ENCODE measurements at regions of chr1 and their contacts with region 1.

Region 1: GRCh38 chr1:31815752-31816500 is at the start of gene SPOCD1:
- DNase-seq: peak; percentile 74
- H3K4me3 Mint-ChIP-seq: no peak within 1 kb of the TSS
- H3K27ac Mint-ChIP-seq: no peak within 1 kb of the TSS
- H3K4me1 Mint-ChIP-seq: peaks cover 10% of the 10 kb centered on the region
- H3K27me3 Mint-ChIP-seq: peaks cover 6% of the 10 kb centered on the region
- total RNA-seq, gene SPOCD1: not detected in 2 replicates

Region 2: GRCh38 chr1:31584041-31584868 is 231.7 kb before region 1 on chr1:
- intact Hi-C with region 1: no loop called
- DNase-seq: no peak
- H3K4me3 Mint-ChIP-seq: no peak overlapping the region
- H3K27ac Mint-ChIP-seq: no peak overlapping the region
- H3K4me1 Mint-ChIP-seq: no peaks in the 10 kb centered on the region
- H3K27me3 Mint-ChIP-seq: peaks cover 6% of the 10 kb centered on the region

Region 3: DNA sequence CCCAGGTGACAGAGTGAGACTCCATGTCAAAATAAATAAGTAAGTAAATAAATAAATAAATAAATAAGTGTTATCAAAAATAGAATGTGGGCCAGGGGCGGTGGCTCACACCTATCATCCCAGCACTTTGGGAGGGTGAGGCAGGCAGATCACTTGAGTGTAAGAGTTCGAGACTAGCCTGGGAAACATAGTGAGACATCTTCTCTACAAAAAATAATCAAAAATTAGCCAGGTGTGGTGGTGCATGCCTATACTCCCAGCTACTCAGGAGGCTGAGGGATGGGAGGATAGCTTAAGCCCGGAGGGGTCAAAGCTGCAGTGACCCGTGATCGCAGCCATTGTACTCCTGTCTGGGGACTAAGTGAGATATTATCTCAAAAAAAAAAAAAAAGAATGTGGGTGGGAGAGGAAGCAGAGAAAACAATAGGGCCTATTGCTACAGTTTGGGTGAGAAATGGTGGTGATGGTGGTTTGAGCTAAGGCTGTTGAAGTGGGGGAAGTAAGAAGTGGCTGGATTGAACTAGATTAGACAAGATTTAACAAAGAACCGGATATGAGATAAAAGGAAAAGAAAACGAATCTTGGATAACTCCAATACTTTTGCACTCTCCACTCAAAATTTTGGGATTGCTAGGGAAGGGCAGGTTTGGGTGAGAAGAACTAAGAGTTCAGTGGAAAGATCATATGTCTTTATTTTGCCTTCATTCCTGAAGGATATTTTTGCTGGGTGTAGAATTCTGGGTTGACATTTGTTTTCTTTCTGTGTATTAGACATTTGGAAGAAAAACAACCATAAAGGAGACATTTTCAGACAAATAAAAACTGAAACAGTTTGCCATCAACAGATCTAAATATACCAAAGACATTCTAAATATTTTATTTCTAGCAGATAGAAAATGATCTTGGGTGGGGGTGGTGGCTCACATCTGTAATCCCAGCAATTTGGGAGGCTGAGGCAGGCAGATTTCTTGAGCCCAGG is 57.0 kb after region 1 on chr1:
- intact Hi-C with region 1: loop called (anchors 1 kb)
- DNase-seq: no peak
- H3K4me3 Mint-ChIP-seq: no peak overlapping the region
- H3K27ac Mint-ChIP-seq: peak overlapping the region; percentile 82
- H3K4me1 Mint-ChIP-seq: peaks cover 19% of the 10 kb centered on the region
- H3K27me3 Mint-ChIP-seq: peaks cover 5% of the 10 kb centered on the region